AG04450 (cell line): ENCODE measurements at regions of chr16 and their contacts with region 1.

Region 1: DNA sequence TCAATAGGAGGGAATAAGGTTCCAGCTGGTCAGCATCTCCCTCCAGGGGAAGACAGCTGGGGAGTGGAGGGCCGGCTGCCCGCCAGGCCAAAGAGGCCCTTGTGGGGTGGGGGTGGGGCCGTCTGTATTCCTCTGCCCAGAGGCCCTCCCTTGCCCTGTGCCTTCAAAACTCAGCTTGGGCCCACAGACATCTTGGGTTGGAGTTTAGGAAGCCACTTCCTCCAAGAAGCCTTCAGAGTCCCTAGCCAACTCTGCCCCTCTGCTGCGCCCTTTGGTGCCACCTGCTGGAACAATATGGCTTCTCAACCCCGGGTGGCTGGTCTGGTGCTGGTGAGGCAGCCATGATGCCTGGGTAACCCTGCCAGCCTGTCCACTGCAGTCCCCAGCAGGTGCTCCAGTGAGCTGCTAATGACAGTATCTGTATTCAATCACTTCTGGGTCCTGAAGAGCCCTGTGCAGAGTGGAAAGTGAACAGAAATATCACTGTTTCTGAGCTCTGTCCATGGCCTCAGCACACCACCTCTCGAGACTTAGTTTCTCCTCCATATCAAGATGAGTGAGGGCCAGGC is 16.7 kb downstream of the HSD11B2 start:
- DNase-seq: peak; percentile 37
- H3K4me3 ChIP-seq: no peak overlapping the region
- H3K27ac ChIP-seq: peak overlapping the region; percentile 47
- H3K27me3 ChIP-seq: no peaks in the 10 kb centered on the region
- CTCF ChIP-seq: peak; percentile 55

Region 2: DNA sequence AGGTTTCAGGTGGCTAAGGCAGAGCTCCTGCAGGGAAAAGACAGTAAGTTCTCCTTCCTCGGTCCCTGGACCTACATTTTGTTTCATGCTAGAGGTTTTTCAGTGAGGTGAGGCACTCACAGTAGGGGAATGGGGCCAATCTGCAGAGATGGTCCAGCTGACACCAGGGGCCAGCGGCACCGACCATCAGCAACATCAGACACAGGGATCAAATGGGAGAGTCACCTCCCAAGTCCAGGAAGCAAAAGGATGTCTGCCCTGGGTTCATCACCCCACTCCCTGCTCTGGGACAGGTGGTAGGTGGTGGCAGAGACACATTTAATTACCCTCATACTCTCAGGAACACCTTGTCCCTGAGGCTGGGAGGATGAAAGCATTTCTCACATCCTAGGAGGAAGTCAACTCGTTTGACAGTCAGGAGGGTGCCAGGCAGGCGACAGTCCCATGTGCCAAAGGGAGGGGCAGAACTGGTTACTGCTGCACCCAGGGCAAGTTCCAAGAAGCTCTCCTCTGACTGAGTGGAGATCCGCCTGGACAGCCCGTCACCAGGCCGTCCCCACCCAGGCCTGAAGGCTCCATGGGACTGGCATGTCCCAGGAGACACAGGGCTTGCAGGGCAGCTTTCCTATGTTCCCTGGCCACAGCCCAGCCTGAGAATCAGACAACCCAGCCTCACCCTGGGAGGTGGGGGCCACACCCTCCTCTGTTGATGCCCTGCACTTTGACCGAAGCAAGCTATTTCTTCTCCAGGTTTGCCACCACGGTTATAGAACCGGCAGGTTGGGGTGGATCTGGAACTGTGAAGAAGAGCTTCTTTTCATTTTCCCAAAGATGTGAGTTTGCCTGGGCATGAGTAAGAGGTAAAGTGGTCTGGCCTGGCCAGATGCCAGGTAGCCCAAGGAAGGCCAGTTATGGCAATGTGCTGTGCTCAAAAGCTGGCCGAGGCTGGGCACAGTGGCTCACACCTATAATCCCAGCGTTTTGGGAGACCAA is 14.3 kb after region 1 on chr16:
- CTCF ChIA-PET with region 1: interaction called, 14 read pairs
- POLR2A ChIA-PET with region 1: interaction called, 8 read pairs
- DNase-seq: no peak
- H3K4me3 ChIP-seq: no peak overlapping the region
- H3K27ac ChIP-seq: no peak overlapping the region
- H3K27me3 ChIP-seq: no peaks in the 10 kb centered on the region
- CTCF ChIP-seq: no peak

Region 3: GRCh38 chr16:67480833-67481560 is 33.4 kb after region 1 on chr16 and contains the start of gene ATP6V0D1:
- CTCF ChIA-PET with region 1: interaction called, 10 read pairs
- POLR2A ChIA-PET with region 1: interaction called, 3 read pairs
- DNase-seq: peak; percentile 96
- H3K4me3 ChIP-seq: peak within 1 kb of the TSS; percentile 96
- H3K27ac ChIP-seq: peak within 1 kb of the TSS; percentile 92
- H3K27me3 ChIP-seq: no peaks in the 10 kb centered on the region
- CTCF ChIP-seq: peak; percentile 89
- polyA plus RNA-seq, gene ATP6V0D1: 101 and 121 TPM in 2 replicates